Activated CD4-positive, alpha-beta T cell treated with anti-CD3 and anti-CD28 coated beads for 36 hours (primary cell): ENCODE measurements at regions of chr10 and their contacts with region 1.

Region 1: DNA sequence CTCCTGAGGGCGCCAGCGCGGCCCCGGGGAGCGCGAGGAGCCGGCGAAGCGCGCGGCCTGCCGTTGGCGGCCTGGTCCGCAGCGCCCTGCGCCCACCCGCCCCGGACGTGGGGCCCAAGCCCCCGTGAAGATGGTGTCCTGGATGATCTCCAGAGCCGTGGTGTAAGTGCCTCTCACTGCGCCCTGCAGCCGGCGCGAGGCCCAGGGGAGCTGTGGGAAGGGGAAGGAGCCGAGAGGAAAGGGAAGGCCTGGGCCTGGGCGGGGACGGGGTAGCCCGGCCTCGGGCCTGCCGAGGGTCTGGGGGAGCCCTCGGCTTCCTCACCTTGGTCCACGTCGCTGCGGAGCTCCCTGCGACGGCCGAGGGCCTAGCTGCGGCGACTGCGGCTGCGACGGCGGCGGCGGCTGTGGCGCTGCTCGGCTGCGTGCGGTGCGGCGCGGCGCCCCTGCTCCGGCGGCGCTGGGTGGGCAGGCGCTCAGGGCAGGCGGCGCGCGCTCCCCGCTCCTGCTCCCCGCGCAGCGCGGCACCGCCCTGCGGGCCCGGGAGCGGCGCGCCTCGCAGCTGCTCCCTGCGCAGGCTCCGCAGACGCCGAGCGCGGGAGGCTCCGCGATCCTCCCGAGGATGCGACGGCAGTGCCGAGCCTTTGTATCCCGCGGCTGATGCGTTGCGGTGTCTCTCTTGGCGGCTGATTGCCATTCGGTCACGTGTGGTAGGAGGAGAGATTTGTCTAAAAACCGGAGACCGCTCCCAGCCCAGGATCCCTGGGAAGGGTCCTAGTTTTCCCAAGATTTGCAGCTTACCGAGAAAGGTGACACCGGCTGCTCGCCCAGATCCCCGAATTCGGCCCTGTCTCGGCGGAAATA is 445 bp downstream of the REEP3 start:
- DNase-seq: peak; percentile 75
- ATAC-seq: peak; percentile 72
- H3K4me3 Mint-ChIP-seq: peak overlapping the region; percentile 86
- H3K27ac Mint-ChIP-seq: peak overlapping the region; percentile 94
- H3K4me1 Mint-ChIP-seq: peaks cover 57% of the 10 kb centered on the region
- H3K27me3 Mint-ChIP-seq: no peaks in the 10 kb centered on the region

Region 2: GRCh38 chr10:63465293-63466143 is 56.1 kb before region 1 on chr10 and contains the start of gene JMJD1C:
- CTCF ChIA-PET with region 1: no interaction called
- POLR2A ChIA-PET with region 1: interaction called, 4 read pairs
- intact Hi-C with region 1: loop called (anchors 1 to 5 kb)
- DNase-seq: peak; percentile 76
- ATAC-seq: peak; percentile 73
- H3K4me3 Mint-ChIP-seq: peak within 1 kb of the TSS; percentile 94
- H3K27ac Mint-ChIP-seq: peak within 1 kb of the TSS; percentile 72
- H3K4me1 Mint-ChIP-seq: peaks cover 23% of the 10 kb centered on the region
- H3K27me3 Mint-ChIP-seq: no peaks in the 10 kb centered on the region
- total RNA-seq, gene JMJD1C: 41.5 to 42.5 TPM

Region 3: GRCh38 chr10:64745565-64745964 is 1223.9 kb after region 1 on chr10:
- CTCF ChIA-PET with region 1: no interaction called
- POLR2A ChIA-PET with region 1: no interaction called
- intact Hi-C with region 1: no loop called
- DNase-seq: no peak
- ATAC-seq: no peak
- H3K4me3 Mint-ChIP-seq: no peak overlapping the region
- H3K27ac Mint-ChIP-seq: no peak overlapping the region
- H3K4me1 Mint-ChIP-seq: no peaks in the 10 kb centered on the region
- H3K27me3 Mint-ChIP-seq: no peaks in the 10 kb centered on the region